ENCODE measurements at regions of chr20 and their contacts with region 1.

Region 1: GRCh38 chr20:63537525-63538203 is 488 bp upstream of the PTK6 start:
- DNase-seq: peak; percentile 97
- H3K4me3 Mint-ChIP-seq: peak overlapping the region; percentile 73
- H3K27ac Mint-ChIP-seq: peak overlapping the region; percentile 87
- H3K4me1 Mint-ChIP-seq: peaks cover 27% of the 10 kb centered on the region
- H3K27me3 Mint-ChIP-seq: peaks cover 2% of the 10 kb centered on the region

Region 2: DNA sequence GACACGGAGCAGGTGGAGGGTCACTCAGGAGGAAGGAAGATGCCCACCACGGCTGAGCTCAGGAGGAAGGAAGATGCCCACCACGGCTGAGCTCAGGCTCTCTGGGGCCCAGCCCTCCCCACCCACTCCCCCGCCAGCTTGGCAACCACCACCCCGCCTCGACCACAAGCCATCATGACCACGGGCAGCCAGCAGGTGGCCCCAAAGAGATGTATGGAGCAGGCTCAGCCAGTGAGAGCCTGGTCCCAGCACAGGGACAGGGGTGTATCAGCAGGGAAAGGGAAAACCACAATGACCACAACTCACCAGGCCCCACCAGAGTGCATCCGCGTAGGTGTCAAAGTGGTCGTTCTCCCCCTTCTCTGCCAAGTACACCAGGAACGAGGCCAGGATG is 95.6 kb before region 1 on chr20:
- CTCF ChIA-PET with region 1: no interaction called
- POLR2A ChIA-PET with region 1: no interaction called
- DNase-seq: peak; percentile 67
- H3K4me3 Mint-ChIP-seq: no peak overlapping the region
- H3K27ac Mint-ChIP-seq: peak overlapping the region; percentile 21
- H3K4me1 Mint-ChIP-seq: peaks cover 16% of the 10 kb centered on the region
- H3K27me3 Mint-ChIP-seq: peaks cover 5% of the 10 kb centered on the region

Region 3: GRCh38 chr20:63520504-63520933 is 17.1 kb before region 1 on chr20 and contains the start of gene PPDPF:
- CTCF ChIA-PET with region 1: interaction called, 14 read pairs
- POLR2A ChIA-PET with region 1: interaction called, 136 read pairs
- DNase-seq: peak; percentile 89
- H3K4me3 Mint-ChIP-seq: peak within 1 kb of the TSS; percentile 79
- H3K27ac Mint-ChIP-seq: peak within 1 kb of the TSS; percentile 81
- H3K4me1 Mint-ChIP-seq: peaks cover 10% of the 10 kb centered on the region
- H3K27me3 Mint-ChIP-seq: peaks cover 9% of the 10 kb centered on the region
- total RNA-seq, gene PPDPF: 228 to 232 TPM

Region 4: DNA sequence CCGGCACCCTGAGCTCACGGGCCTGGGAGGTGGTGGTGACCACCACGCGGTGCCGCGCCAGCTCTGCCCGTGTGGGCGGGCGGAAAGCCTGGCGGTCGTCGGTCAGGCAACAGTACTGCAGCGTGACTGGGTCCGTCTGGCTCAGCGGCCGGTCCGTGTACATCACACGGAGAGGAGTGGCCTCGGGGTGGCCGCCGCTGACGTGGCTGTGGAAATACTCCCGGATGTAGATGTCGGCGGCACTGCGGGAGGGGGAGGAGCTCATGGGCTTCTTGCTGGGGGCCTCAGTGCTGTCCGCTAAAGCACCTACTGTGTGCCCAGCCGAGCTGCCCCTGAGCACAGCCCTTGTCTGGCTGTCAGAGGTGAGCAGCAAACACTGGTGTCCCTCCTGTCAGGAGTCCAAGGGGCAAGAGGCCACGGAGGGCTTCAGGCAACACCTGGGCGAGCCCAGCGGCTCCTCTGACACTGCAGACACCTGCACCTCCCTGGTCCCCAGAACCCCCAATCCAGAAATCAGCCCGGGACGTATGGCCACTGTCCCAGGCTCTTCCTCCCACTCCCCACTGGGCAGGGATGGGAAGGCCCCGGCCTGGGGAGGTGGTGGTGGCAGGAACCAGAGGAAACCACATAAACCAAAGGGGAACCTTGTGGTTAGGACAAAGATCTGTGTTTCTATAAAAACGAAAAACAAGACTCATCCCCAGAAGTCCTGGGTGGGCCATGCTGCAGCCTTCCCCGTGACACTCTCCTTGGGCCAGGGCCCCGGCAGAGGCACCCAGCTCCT is 29.9 kb after region 1 on chr20:
- CTCF ChIA-PET with region 1: interaction called, 8 read pairs
- POLR2A ChIA-PET with region 1: interaction called, 18 read pairs
- DNase-seq: peak; percentile 76
- H3K4me3 Mint-ChIP-seq: peak overlapping the region; percentile 63
- H3K27ac Mint-ChIP-seq: peak overlapping the region; percentile 73
- H3K4me1 Mint-ChIP-seq: peaks cover 32% of the 10 kb centered on the region
- H3K27me3 Mint-ChIP-seq: no peaks in the 10 kb centered on the region

Region 5: DNA sequence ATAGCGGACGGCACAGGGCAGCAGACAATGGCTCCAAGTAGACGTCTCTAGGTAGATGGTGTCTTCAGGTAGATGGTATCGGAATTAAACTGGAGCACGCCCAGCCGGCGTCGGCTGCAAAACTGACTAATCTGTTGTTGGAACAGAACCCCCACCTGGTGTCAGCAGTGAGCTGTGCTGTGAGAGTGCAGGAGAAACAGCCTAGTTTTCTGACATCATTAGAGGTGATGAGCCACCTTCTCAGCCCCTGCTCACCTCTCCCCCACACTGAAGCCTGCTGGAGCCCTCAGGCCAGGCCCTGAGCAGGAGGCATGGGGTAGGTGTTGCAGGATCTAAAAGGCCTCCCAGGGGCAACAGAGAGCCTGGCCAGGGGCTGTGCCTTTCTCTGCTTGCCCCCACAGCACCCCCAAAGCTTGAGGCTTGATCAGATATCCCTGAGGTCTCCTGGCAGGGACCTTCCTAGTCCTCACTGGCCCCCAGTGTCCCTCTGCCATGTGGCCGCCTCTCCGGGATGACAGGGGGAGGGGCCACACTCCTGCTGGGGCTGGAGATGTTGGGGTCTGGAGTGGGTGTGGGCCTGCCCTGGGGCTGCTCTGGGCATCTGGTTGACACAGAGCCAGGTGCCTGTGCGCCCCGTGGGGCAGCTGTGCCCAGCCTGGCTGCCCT is 43.3 kb after region 1 on chr20:
- CTCF ChIA-PET with region 1: no interaction called
- POLR2A ChIA-PET with region 1: no interaction called
- DNase-seq: peak; percentile 80
- H3K4me3 Mint-ChIP-seq: no peak overlapping the region
- H3K27ac Mint-ChIP-seq: no peak overlapping the region
- H3K4me1 Mint-ChIP-seq: peaks cover 2% of the 10 kb centered on the region
- H3K27me3 Mint-ChIP-seq: peaks cover 38% of the 10 kb centered on the region

Region 6: GRCh38 chr20:63641792-63642544 is 104.3 kb after region 1 on chr20:
- CTCF ChIA-PET with region 1: interaction called, 28 read pairs
- POLR2A ChIA-PET with region 1: interaction called, 22 read pairs
- DNase-seq: peak; percentile 97
- H3K4me3 Mint-ChIP-seq: peak overlapping the region; percentile 69
- H3K27ac Mint-ChIP-seq: peak overlapping the region; percentile 71
- H3K4me1 Mint-ChIP-seq: peaks cover 31% of the 10 kb centered on the region
- H3K27me3 Mint-ChIP-seq: peaks cover 3% of the 10 kb centered on the region

Region 7: GRCh38 chr20:63686492-63687321 is 149.0 kb after region 1 on chr20:
- CTCF ChIA-PET with region 1: no interaction called
- POLR2A ChIA-PET with region 1: no interaction called
- DNase-seq: no peak
- H3K4me3 Mint-ChIP-seq: no peak overlapping the region
- H3K27ac Mint-ChIP-seq: no peak overlapping the region
- H3K4me1 Mint-ChIP-seq: peaks cover 14% of the 10 kb centered on the region
- H3K27me3 Mint-ChIP-seq: no peaks in the 10 kb centered on the region

Region 8: GRCh38 chr20:63707549-63708300 is 170.1 kb after region 1 on chr20 and contains the starts of genes ARFRP1 and ZGPAT:
- CTCF ChIA-PET with region 1: interaction called, 14 read pairs
- POLR2A ChIA-PET with region 1: interaction called, 3 read pairs
- DNase-seq: peak; percentile 93
- H3K4me3 Mint-ChIP-seq: peak within 1 kb of the TSS; percentile 90
- H3K27ac Mint-ChIP-seq: peak within 1 kb of the TSS; percentile 87
- H3K4me1 Mint-ChIP-seq: peaks cover 59% of the 10 kb centered on the region
- H3K27me3 Mint-ChIP-seq: no peaks in the 10 kb centered on the region
- total RNA-seq, gene ARFRP1: 52.9 to 53.4 TPM
- total RNA-seq, gene ZGPAT: 41.6 to 42.8 TPM

Region 9: DNA sequence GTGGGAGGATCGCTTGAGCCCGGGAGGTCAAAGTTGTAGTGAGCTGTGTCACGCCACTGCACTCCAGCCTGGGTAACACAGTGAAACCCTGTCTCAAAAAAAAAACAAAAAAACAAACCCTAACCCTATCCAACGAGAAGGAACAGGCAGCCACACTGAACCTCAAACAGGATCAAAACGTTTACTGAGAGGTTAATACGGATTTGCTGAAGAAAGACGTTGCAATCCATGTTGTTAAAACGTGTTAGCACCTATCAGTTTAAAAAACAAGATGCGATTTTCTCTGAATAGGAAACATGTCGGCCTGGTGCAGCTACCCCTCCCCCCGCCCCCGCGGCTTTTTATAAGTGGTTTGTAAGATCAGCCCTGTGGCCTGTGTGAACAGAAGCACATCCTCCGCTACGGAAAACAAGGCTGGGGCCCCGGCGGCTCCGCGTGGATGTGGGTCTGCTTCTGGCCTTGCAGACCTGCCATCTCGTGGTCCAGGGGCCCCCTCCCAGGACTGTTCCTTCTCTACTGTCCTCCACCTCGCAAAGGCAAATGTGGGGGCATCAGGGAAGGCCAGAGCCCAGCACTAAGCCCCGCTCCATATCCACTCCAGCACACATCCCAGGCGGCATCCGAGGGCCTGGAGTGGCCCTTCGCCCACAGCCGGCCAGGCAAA is 213.3 kb after region 1 on chr20:
- CTCF ChIA-PET with region 1: no interaction called
- POLR2A ChIA-PET with region 1: no interaction called
- DNase-seq: peak; percentile 75
- H3K4me3 Mint-ChIP-seq: peak overlapping the region; percentile 51
- H3K27ac Mint-ChIP-seq: peak overlapping the region; percentile 87
- H3K4me1 Mint-ChIP-seq: peaks cover 22% of the 10 kb centered on the region
- H3K27me3 Mint-ChIP-seq: peaks cover 3% of the 10 kb centered on the region

Region 10: GRCh38 chr20:63973636-63974402 is 436.2 kb after region 1 on chr20:
- CTCF ChIA-PET with region 1: interaction called, 10 read pairs
- POLR2A ChIA-PET with region 1: no interaction called
- DNase-seq: peak; percentile 79
- H3K4me3 Mint-ChIP-seq: no peak overlapping the region
- H3K27ac Mint-ChIP-seq: no peak overlapping the region
- H3K4me1 Mint-ChIP-seq: peaks cover 44% of the 10 kb centered on the region
- H3K27me3 Mint-ChIP-seq: no peaks in the 10 kb centered on the region